AG04450 (cell line): ENCODE measurements at regions of chr14 and their contacts with region 1.

Region 1: DNA sequence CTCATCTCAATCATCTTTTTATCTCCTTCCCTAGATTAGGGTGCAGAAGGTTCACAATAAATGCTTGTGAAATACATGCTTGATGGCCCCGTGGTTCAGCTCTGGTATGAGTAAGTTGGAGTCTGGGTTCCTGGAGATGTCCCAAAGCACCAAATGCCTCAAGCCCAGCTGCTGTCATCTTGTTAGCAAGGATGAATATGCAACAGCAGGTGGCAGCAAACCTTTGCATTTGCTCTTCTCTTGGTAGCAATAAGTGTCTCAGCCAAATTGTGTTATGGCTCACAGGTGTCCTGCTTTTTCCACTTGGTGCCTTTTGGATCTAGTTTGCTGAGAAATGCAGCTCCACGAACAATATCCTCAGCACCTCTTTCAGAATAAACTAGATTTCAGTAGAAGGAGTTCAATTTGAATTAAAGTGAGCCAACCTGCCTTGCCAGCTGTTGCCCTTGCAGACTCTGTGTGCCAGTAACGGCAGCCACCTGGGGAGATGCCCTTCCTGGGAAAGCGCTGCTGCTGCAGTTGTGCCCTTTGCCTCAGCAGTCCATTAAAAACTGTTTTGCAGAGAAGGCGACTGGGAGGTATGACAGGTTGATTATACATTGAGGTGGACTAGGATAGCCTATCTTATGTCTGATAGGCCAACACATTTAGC is 417.3 kb downstream of the SNAPC1 start:
- DNase-seq: peak; percentile 87
- H3K4me3 ChIP-seq: no peak overlapping the region
- H3K27ac ChIP-seq: no peak overlapping the region
- H3K27me3 ChIP-seq: no peaks in the 10 kb centered on the region
- CTCF ChIP-seq: peak; percentile 84

Region 2: GRCh38 chr14:62694075-62694474 is 514.6 kb after region 1 on chr14:
- CTCF ChIA-PET with region 1: interaction called, 11 read pairs
- POLR2A ChIA-PET with region 1: no interaction called
- DNase-seq: peak; percentile 97
- H3K4me3 ChIP-seq: no peak overlapping the region
- H3K27ac ChIP-seq: peak overlapping the region; percentile 91
- H3K27me3 ChIP-seq: no peaks in the 10 kb centered on the region
- CTCF ChIP-seq: no peak

Region 3: DNA sequence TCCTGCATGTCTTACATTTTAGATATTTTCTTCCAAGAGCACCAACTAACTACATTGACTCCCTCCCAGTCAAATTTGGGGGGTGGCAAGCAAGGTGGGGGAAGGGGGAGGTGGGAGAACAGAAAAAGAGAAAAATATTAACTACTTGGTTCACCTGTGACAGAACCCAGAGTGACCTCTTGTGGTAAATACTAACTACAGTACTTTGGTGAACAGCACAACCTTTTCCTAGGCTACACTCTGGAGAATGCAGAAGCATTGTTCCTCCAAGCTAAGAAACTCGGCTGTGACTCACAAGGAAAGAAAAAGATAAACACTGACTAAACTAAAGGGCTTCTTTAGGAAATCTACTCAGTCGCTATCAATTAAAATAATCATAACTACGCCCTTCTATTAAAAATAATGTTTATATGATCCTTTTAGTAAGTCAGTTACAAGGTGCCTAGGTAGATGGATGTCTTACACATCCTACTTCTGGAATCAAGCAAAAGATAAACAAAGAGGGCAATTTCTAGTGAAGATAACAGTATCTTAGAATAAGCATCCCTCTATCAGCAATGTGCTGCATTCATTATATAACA is 860.4 kb after region 1 on chr14:
- CTCF ChIA-PET with region 1: interaction called, 17 read pairs
- POLR2A ChIA-PET with region 1: no interaction called
- DNase-seq: peak; percentile 59
- H3K4me3 ChIP-seq: no peak overlapping the region
- H3K27ac ChIP-seq: no peak overlapping the region
- H3K27me3 ChIP-seq: peaks cover 6% of the 10 kb centered on the region
- CTCF ChIP-seq: peak; percentile 49